Ascending aorta (tissue), 2 donors: ENCODE measurements at regions of chr12 and their contacts with region 1.

Region 1: GRCh38 chr12:389139-390096 is at the start of gene KDM5A:
- DNase-seq: peak; percentile 28 to 94
- H3K4me3 ChIP-seq: peak within 1 kb of the TSS; percentile 82 to 85
- H3K27ac ChIP-seq: peak within 1 kb of the TSS; percentile 88 to 93
- H3K4me1 ChIP-seq: peaks cover 0 to 11% of the 10 kb centered on the region in 2 donors
- H3K27me3 ChIP-seq: no peaks in the 10 kb centered on the region
- CTCF ChIP-seq: no peak
- total RNA-seq, gene KDM5A: 32.4 TPM

Region 2: GRCh38 chr12:401235-402028 is 12.0 kb after region 1 on chr12 and contains the start of gene CCDC77:
- intact Hi-C with region 1: loop called (anchors 1 kb)
- DNase-seq: peak; percentile 65 to 95
- H3K4me3 ChIP-seq: peak within 1 kb of the TSS; percentile 77 to 85
- H3K27ac ChIP-seq: peak within 1 kb of the TSS; percentile 64 to 73
- H3K4me1 ChIP-seq: peaks cover 3 to 6% of the 10 kb centered on the region in 2 donors
- H3K27me3 ChIP-seq: no peaks in the 10 kb centered on the region
- CTCF ChIP-seq: peak in 2 of 3 experiments; percentile 26 to 37
- total RNA-seq, gene CCDC77: not detected